H1 (cell line): ENCODE measurements at regions of chr16 and their contacts with region 1.

Region 1: GRCh38 chr16:49958448-49958847 is 66.6 kb upstream of the CNEP1R1 start:
- DNase-seq: no peak
- H3K4me3 ChIP-seq: no peak overlapping the region
- H3K27ac ChIP-seq: no peak overlapping the region
- H3K4me1 ChIP-seq: no peaks in the 10 kb centered on the region
- H3K27me3 ChIP-seq: no peaks in the 10 kb centered on the region
- CTCF ChIP-seq: no peak
- EP300 ChIP-seq: no peak
- POLR2A ChIP-seq: no peak
- RAD21 ChIP-seq: no peak

Region 2: DNA sequence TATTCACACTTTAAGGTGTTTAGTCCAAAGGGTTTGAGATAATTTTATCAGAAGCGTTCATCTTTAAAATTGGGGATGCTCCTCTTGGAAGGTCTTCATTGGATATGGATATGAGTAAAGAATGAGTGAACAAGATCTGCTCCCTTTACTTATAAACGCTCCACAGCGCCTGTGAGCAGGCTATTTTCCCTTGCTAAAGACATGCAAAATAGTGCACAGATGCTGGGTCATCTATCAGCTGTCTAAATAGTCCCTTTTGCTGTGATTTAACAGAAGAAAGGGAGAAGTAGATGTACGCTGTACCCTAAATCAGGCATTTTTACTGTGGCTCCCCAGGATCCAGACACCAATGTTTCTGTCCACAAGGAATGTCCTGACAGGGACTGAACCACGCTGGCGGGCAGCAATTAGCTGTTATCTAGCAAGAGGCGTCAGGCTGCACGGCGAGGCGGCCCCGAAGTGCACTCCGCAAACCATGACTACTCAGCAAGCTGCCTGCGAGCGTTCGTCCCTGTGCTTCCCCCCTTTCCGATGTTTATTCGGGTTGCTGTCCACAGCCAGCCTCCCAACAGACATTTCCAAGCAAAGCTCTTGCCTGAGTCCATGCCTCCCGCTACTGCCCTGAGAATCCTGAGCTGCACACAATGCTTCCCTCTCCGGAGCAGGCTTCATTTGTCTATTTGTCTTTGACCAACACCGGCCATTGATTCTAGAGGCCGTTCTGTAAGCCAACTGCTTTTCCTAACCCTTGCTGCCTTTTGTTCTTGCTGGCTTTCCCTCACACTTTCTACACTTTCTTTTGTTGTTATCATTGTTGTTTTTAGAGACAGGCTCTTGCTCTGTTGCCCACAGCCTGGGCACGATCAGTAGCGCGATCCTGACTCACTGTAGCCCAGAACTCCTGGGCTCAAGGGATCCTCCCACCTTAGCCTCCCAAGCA is 10.9 kb after region 1 on chr16:
- CTCF ChIA-PET with region 1: interaction called, 51 read pairs
- POLR2A ChIA-PET with region 1: no interaction called
- DNase-seq: no peak
- H3K4me3 ChIP-seq: no peak overlapping the region
- H3K27ac ChIP-seq: no peak overlapping the region
- H3K4me1 ChIP-seq: no peaks in the 10 kb centered on the region
- H3K27me3 ChIP-seq: no peaks in the 10 kb centered on the region
- CTCF ChIP-seq: no peak
- EP300 ChIP-seq: no peak
- POLR2A ChIP-seq: no peak
- RAD21 ChIP-seq: no peak

Region 3: DNA sequence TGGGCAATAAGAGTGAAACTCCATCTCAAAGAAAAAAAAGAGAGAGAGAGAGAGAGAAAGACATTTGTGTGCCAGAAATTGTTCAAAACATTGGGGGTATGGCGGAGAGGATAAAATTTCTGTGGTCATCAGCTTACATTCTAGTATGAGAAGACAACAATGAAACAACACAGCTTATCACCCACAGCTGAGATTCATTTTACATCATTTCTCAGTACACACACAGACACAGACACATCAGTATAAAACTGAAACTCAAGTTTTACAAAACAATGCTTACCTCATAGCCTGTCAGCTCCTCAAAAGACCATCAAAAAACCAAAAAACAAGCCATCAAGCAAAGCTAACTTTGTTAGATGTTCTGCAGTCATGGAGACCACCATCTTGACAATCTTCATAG is 35.1 kb after region 1 on chr16:
- CTCF ChIA-PET with region 1: interaction called, 12 read pairs
- POLR2A ChIA-PET with region 1: no interaction called
- DNase-seq: no peak
- H3K4me3 ChIP-seq: no peak overlapping the region
- H3K27ac ChIP-seq: no peak overlapping the region
- H3K4me1 ChIP-seq: no peaks in the 10 kb centered on the region
- H3K27me3 ChIP-seq: no peaks in the 10 kb centered on the region
- CTCF ChIP-seq: no peak
- EP300 ChIP-seq: no peak
- POLR2A ChIP-seq: no peak
- RAD21 ChIP-seq: no peak

Region 4: GRCh38 chr16:50024684-50025536 is 66.5 kb after region 1 on chr16 and contains the start of gene CNEP1R1:
- CTCF ChIA-PET with region 1: interaction called, 16 read pairs
- POLR2A ChIA-PET with region 1: no interaction called
- DNase-seq: peak; percentile 92 to 94
- H3K4me3 ChIP-seq: peak within 1 kb of the TSS; percentile 59 to 95 (median 90)
- H3K27ac ChIP-seq: no peak within 1 kb of the TSS
- H3K4me1 ChIP-seq: peaks cover 0 to 6% (median 0%) of the 10 kb centered on the region in 4 experiments; a peak in 2 of 7 replicates
- H3K27me3 ChIP-seq: no peaks in the 10 kb centered on the region
- CTCF ChIP-seq: peak; percentile 93 to 99 (median 96)
- EP300 ChIP-seq: peak in 1 of 2 experiments; percentile 50; a peak in 1 of 3 replicates
- POLR2A ChIP-seq: peak in 1 of 2 experiments; percentile 28; a peak in 1 of 3 replicates
- RAD21 ChIP-seq: peak; percentile 85 to 88
- total RNA-seq, gene CNEP1R1: 13.6 and 16.2 TPM in 2 replicates

Region 5: GRCh38 chr16:50210266-50211038 is 252.0 kb after region 1 on chr16:
- CTCF ChIA-PET with region 1: no interaction called
- POLR2A ChIA-PET with region 1: no interaction called
- DNase-seq: peak; percentile 38 to 59
- H3K4me3 ChIP-seq: no peak overlapping the region
- H3K27ac ChIP-seq: no peak overlapping the region
- H3K4me1 ChIP-seq: peaks cover 0 to 6% (median 3%) of the 10 kb centered on the region in 4 experiments; a peak in 3 of 7 replicates
- H3K27me3 ChIP-seq: no peaks in the 10 kb centered on the region
- CTCF ChIP-seq: peak; percentile 67 to 95 (median 87)
- EP300 ChIP-seq: no peak
- POLR2A ChIP-seq: no peak
- RAD21 ChIP-seq: peak; percentile 77 to 78